ENCODE measurements at regions of chr9 and their contacts with region 1.

Region 1: GRCh38 chr9:3059781-3060468 is 216.0 kb upstream of the PUM3 start:
- DNase-seq: no peak
- H3K4me3 Mint-ChIP-seq: no peak overlapping the region
- H3K27ac Mint-ChIP-seq: no peak overlapping the region
- H3K4me1 Mint-ChIP-seq: peaks cover 6% of the 10 kb centered on the region
- H3K27me3 Mint-ChIP-seq: peaks cover 31% of the 10 kb centered on the region
- CTCF ChIP-seq: no peak

Region 2: DNA sequence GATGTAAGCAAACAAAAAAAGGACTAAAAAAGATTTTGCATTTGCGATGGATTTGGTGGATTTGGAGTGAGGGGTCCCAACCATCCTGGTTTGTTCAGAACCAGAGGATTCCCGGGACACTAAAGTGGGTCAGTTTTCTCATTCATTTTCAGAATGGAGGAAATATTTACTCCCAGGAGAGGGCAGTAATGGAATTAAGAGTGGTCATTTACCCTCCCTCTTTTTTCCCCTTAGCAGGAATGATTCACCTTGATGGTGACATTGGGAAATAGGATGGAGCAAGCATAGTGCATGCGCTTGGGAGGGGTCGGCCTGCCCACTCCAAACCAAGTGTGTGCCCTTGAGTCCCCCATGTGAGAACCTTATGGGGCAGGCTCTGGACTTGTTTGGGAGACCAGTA is 51.8 kb before region 1 on chr9:
- CTCF ChIA-PET with region 1: no interaction called
- POLR2A ChIA-PET with region 1: no interaction called
- intact Hi-C with region 1: loop called (anchors 5 kb)
- DNase-seq: peak; percentile 17
- H3K4me3 Mint-ChIP-seq: no peak overlapping the region
- H3K27ac Mint-ChIP-seq: no peak overlapping the region
- H3K4me1 Mint-ChIP-seq: no peaks in the 10 kb centered on the region
- H3K27me3 Mint-ChIP-seq: no peaks in the 10 kb centered on the region
- CTCF ChIP-seq: no peak

Region 3: DNA sequence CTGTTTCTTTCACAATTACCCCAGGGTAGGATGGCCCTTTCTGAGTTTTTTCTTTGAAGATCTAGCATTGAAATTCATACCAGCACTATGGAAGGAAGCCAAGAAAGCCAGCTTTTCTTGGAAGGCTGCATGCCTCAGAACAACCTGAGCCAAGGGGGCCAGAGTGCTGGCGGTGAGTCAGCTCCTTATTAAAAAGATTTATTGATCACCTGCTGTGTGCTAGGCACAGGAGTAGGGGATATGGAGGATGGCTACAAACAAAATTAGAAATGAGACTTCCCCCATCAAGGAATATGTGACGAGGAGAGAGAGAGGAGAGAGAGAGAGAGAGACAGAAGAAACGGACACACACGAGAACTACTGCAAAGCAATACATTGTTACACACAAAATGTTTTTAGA is 31.4 kb before region 1 on chr9:
- CTCF ChIA-PET with region 1: no interaction called
- POLR2A ChIA-PET with region 1: no interaction called
- intact Hi-C with region 1: no loop called
- DNase-seq: peak; percentile 6
- H3K4me3 Mint-ChIP-seq: no peak overlapping the region
- H3K27ac Mint-ChIP-seq: no peak overlapping the region
- H3K4me1 Mint-ChIP-seq: no peaks in the 10 kb centered on the region
- H3K27me3 Mint-ChIP-seq: peaks cover 38% of the 10 kb centered on the region
- CTCF ChIP-seq: no peak

Measured in MCF 10A (cell line).